B cell (primary cell): ENCODE measurements at regions of chr14 and their contacts with region 1.

Region 1: GRCh38 chr14:68401855-68402254 is 391.0 kb downstream of the ZFP36L1 start:
- DNase-seq: peak; percentile 71
- ATAC-seq: peak; percentile 59
- H3K4me3 ChIP-seq: peak overlapping the region in 1 of 5 experiments; percentile 57
- H3K4me3 Mint-ChIP-seq: peak overlapping the region; percentile 82
- H3K27ac ChIP-seq: peak overlapping the region; percentile 91 to 96
- H3K27ac Mint-ChIP-seq: peak overlapping the region; percentile 97
- H3K4me1 ChIP-seq: peaks cover 91 to 94% of the 10 kb centered on the region in 2 donors
- H3K4me1 Mint-ChIP-seq: peaks cover 90% of the 10 kb centered on the region
- H3K27me3 ChIP-seq: no peaks in the 10 kb centered on the region
- H3K27me3 Mint-ChIP-seq: no peaks in the 10 kb centered on the region
- CTCF ChIP-seq: no peak

Region 2: GRCh38 chr14:68268197-68268596 is 133.7 kb before region 1 on chr14:
- CTCF ChIA-PET with region 1: interaction called, 10 read pairs
- POLR2A ChIA-PET with region 1: no interaction called
- intact Hi-C with region 1: loop called (anchors 5 kb)
- DNase-seq: peak; percentile 92
- ATAC-seq: peak; percentile 71
- H3K4me3 ChIP-seq: peak overlapping the region in 1 of 5 experiments; percentile 14
- H3K4me3 Mint-ChIP-seq: peak overlapping the region; percentile 72
- H3K27ac ChIP-seq: peak overlapping the region; percentile 78 to 94
- H3K27ac Mint-ChIP-seq: peak overlapping the region; percentile 95
- H3K4me1 ChIP-seq: peaks cover 78 to 89% of the 10 kb centered on the region in 2 donors
- H3K4me1 Mint-ChIP-seq: peaks cover 80% of the 10 kb centered on the region
- H3K27me3 ChIP-seq: no peaks in the 10 kb centered on the region
- H3K27me3 Mint-ChIP-seq: no peaks in the 10 kb centered on the region
- CTCF ChIP-seq: no peak

Region 3: DNA sequence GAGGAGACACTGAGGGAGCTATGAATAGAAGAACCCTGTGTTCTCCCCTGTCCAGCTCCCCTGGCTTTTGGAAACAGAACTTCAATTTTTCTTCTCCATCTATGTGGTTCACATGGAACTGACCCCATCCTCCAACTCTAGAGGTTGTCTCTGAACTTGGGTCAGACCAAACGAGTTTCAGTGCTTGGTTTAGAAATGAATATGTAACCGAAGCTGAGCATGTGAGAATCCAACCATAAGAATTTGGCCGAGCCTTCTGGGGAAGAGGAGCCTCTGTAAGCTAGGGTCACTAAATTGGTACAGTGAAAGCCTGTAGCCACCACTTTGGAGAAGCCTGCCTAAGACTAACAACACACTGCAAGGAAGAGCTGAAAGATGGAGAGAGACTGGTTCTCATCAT is 73.3 kb before region 1 on chr14:
- CTCF ChIA-PET with region 1: interaction called, 5 read pairs
- POLR2A ChIA-PET with region 1: interaction called, 8 read pairs
- intact Hi-C with region 1: loop called (anchors 5 kb)
- DNase-seq: no peak
- ATAC-seq: no peak
- H3K4me3 ChIP-seq: no peak overlapping the region
- H3K4me3 Mint-ChIP-seq: no peak overlapping the region
- H3K27ac ChIP-seq: no peak overlapping the region
- H3K27ac Mint-ChIP-seq: no peak overlapping the region
- H3K4me1 ChIP-seq: peaks cover 47 to 53% of the 10 kb centered on the region in 2 donors
- H3K4me1 Mint-ChIP-seq: peaks cover 59% of the 10 kb centered on the region
- H3K27me3 ChIP-seq: no peaks in the 10 kb centered on the region
- H3K27me3 Mint-ChIP-seq: no peaks in the 10 kb centered on the region
- CTCF ChIP-seq: no peak

Region 4: DNA sequence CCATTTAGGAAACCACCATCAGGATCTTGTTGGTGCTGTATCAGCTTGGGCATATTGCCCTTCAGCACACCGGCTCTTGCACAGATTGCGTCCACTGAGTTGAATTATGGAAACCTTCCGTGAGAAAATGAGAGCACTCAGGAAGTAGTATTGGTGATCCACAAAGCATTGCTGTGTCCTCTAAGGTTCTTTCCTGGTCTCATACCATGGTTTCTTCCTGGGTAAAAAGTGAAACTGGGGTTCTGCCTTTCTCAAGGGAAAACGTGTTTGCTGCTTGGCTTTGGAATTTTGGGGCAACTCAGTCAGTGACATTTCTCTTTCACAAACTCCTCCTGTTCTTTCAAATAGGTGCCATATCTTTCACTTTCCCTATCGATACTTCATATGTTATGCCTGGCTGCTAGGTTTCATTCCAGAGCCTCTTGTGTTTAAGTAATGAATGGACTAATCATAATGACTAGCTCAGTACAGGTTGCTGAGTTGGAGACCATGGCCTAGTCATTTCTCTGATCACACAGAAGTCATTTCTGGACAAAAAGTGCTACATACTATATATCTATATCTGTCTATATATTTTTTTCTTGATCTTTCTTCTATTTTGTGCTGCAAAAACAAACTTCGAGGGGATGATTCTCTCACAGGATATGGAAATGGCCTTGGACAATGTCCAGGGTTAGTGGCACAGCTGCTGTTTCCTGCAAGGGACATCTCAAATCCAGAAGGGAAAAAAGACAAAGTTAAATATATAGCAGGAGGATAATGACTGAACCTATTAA is 32.4 kb before region 1 on chr14:
- CTCF ChIA-PET with region 1: interaction called, 11 read pairs
- POLR2A ChIA-PET with region 1: interaction called, 4 read pairs
- intact Hi-C with region 1: loop called (anchors 2 kb)
- DNase-seq: peak; percentile 52
- ATAC-seq: peak; percentile 4
- H3K4me3 ChIP-seq: peak overlapping the region in 4 of 5 experiments; percentile 1 to 20 (median 14)
- H3K4me3 Mint-ChIP-seq: peak overlapping the region; percentile 73
- H3K27ac ChIP-seq: peak overlapping the region; percentile 78 to 84
- H3K27ac Mint-ChIP-seq: peak overlapping the region; percentile 97
- H3K4me1 ChIP-seq: peaks cover 78 to 92% of the 10 kb centered on the region in 2 donors
- H3K4me1 Mint-ChIP-seq: peaks cover 93% of the 10 kb centered on the region
- H3K27me3 ChIP-seq: no peaks in the 10 kb centered on the region
- H3K27me3 Mint-ChIP-seq: no peaks in the 10 kb centered on the region
- CTCF ChIP-seq: no peak

Region 5: DNA sequence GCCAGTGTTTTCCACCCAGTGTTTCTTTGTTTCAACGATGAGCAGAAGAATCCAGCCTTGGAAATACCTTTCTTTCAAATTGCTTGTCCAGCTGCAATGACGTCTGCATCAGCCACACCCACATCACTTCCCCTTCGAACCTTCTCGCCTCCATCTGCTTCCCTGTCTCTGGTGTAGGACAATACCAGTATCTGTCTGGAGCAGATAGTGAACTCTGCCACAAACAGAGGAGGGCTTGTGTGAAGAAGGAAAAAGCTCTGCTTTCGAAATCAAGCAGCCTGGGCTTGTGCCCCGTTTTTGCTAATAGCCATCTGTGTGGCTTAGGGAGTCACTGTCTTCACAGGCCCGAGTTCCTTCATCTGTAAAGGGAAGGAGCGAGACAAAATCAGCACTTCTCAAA is 24.4 kb before region 1 on chr14:
- CTCF ChIA-PET with region 1: interaction called, 5 read pairs
- POLR2A ChIA-PET with region 1: interaction called, 7 read pairs
- intact Hi-C with region 1: loop called (anchors 2 kb)
- DNase-seq: peak; percentile 67
- ATAC-seq: peak; percentile 50
- H3K4me3 ChIP-seq: peak overlapping the region in 1 of 5 experiments; percentile 27
- H3K4me3 Mint-ChIP-seq: peak overlapping the region; percentile 76
- H3K27ac ChIP-seq: peak overlapping the region; percentile 34 to 60
- H3K27ac Mint-ChIP-seq: peak overlapping the region; percentile 92
- H3K4me1 ChIP-seq: peaks cover 50 to 54% of the 10 kb centered on the region in 2 donors
- H3K4me1 Mint-ChIP-seq: peaks cover 63% of the 10 kb centered on the region
- H3K27me3 ChIP-seq: no peaks in the 10 kb centered on the region
- H3K27me3 Mint-ChIP-seq: no peaks in the 10 kb centered on the region
- CTCF ChIP-seq: no peak

Region 6: GRCh38 chr14:68386950-68387779 is 14.7 kb before region 1 on chr14:
- CTCF ChIA-PET with region 1: no interaction called
- POLR2A ChIA-PET with region 1: no interaction called
- intact Hi-C with region 1: loop called (anchors 2 kb)
- DNase-seq: no peak
- ATAC-seq: no peak
- H3K4me3 ChIP-seq: no peak overlapping the region
- H3K4me3 Mint-ChIP-seq: no peak overlapping the region
- H3K27ac ChIP-seq: no peak overlapping the region
- H3K27ac Mint-ChIP-seq: no peak overlapping the region
- H3K4me1 ChIP-seq: peaks cover 10 to 18% of the 10 kb centered on the region in 2 donors
- H3K4me1 Mint-ChIP-seq: peaks cover 26% of the 10 kb centered on the region
- H3K27me3 ChIP-seq: no peaks in the 10 kb centered on the region
- H3K27me3 Mint-ChIP-seq: no peaks in the 10 kb centered on the region
- CTCF ChIP-seq: no peak

Region 7: DNA sequence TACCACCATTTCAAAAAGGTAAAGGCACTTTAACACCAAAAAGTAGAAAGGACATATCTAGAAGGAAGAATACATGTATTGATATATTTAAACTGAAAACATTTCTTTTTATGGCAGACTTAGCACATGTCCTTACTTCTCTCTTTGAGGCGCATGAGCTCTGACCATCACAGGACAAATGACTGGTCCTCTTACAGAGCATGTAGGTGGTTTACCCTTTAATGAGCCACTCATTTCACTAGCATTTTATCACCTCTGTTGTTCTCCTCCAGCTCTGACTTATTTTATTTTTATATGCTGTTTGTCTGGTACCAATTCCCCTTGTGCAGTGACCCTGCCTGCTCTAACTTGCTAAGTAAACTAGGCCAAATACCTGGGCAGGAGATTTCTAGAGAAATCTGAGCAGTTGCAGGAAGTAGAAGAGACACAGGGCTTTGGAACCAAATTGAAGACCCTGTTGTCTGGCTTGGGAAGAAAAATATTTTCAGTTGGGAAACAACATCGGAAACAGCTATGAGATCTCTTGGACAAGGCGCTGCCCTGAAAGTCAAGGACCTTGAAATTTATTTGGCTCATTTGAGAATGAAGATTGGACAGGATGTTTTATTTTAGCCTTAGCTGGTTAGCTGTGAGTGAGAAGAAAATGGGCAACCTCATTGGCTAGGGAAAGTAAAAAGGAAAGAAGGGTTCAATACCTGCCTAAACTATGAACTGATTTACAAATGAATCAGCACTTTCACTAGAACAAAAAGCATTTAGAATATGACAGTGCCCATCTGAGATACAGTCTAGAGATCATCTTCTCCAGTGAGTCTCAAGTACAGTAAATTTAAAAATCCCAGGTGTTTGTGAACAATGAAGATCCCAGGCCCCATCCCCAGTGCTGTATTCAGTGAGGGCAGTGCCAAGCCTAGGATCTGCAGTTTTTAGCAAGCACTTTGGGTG is 16.6 kb after region 1 on chr14:
- CTCF ChIA-PET with region 1: no interaction called
- POLR2A ChIA-PET with region 1: no interaction called
- intact Hi-C with region 1: no loop called
- DNase-seq: no peak
- ATAC-seq: no peak
- H3K4me3 ChIP-seq: no peak overlapping the region
- H3K4me3 Mint-ChIP-seq: no peak overlapping the region
- H3K27ac ChIP-seq: no peak overlapping the region
- H3K27ac Mint-ChIP-seq: no peak overlapping the region
- H3K4me1 ChIP-seq: peaks cover 11 to 14% of the 10 kb centered on the region in 2 donors
- H3K4me1 Mint-ChIP-seq: peaks cover 34% of the 10 kb centered on the region
- H3K27me3 ChIP-seq: no peaks in the 10 kb centered on the region
- H3K27me3 Mint-ChIP-seq: no peaks in the 10 kb centered on the region
- CTCF ChIP-seq: no peak

Region 8: DNA sequence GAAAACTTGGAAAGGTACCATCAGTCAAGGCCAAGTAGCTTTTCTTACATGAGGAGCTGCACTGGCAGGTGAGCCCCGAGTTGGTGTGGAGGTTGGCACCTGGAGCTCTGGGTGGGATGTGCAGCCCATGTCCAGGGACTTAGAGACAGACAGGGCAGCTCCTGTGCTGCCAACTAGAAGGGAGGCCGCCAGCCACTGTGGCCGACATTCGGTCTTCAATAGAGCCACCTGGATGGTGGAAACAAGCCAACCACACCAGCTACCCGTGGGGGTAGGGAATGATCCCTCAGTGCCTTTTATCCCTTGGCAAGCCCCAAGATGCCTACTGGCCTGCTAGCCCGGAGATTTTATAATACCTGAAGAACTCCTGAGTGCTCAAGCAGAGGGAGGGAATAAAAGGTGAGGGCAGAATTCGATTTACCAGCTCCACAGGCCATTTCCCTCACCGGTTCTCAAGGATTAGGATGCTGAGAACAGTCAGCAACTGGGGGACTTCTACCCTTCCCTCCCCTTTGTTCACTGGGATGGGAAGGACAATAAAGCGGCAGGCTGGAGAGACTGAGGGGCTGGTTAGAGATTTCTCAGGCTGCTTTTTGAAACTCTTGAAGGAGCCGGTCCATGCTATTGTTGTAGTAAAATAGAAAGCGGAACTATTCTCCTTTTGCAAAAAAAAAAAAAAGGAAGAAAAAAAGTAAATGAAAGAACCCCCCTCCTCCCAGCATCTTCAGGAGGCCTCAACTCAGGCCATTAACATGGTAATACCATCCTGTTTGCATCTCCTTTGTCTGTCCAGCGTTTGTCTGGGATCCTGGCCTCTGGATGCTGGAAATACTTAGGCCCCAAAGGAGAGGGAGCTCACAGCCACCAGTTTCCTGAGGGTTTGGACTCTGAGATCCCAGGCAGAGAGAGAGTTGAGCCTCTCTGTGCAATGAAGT is 69.4 kb after region 1 on chr14:
- CTCF ChIA-PET with region 1: no interaction called
- POLR2A ChIA-PET with region 1: interaction called, 3 read pairs
- intact Hi-C with region 1: loop called (anchors 5 kb)
- DNase-seq: peak; percentile 79
- ATAC-seq: peak; percentile 82
- H3K4me3 ChIP-seq: peak overlapping the region in 1 of 5 experiments; percentile 28
- H3K4me3 Mint-ChIP-seq: peak overlapping the region; percentile 57
- H3K27ac ChIP-seq: peak overlapping the region; percentile 94
- H3K27ac Mint-ChIP-seq: peak overlapping the region; percentile 97
- H3K4me1 ChIP-seq: peaks cover 78 to 80% of the 10 kb centered on the region in 2 donors
- H3K4me1 Mint-ChIP-seq: peaks cover 73% of the 10 kb centered on the region
- H3K27me3 ChIP-seq: no peaks in the 10 kb centered on the region
- H3K27me3 Mint-ChIP-seq: no peaks in the 10 kb centered on the region
- CTCF ChIP-seq: no peak

Region 9: DNA sequence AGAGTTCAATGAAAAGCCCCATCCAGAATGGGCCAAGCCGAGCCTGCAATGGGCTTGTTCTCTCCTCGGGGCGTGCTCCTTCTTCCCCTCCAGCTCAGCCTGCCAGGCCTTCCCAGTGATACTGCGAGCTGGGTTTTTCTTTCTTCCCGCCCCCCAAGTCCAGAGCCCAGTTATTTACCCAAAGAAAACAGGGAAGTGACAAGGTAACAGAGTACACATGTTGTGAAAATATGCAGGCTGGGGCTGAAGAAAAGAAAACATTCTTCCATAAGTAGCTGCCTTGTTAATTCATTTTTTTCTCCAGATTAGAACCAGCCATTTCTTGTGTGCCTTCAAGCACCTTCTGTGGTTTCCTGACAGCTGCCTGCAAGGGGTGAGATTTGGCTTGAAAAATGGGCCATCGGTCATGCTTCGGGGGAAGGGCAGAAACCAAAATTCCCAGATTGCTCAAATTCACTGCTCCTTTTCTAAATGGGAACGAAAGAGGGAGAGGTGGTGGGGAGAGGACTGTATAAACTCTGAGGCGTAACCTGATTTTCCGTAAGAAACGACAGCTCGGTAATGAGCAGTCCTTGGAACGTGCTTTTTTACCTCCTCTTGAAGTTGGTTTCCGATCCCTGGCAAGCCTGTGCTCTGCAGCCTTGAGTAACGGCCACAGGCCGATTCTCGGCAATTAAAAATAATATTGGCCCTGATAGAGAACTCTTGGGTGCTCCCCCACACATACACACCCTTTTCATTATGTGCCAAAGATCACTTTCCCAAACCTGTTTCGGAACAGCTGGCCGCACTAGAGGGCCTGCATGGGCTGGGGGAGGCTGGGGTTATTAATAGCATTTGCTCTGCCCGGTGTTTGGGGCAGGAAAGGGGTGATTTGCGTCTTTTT is 161.6 kb after region 1 on chr14:
- CTCF ChIA-PET with region 1: no interaction called
- POLR2A ChIA-PET with region 1: no interaction called
- intact Hi-C with region 1: no loop called
- DNase-seq: peak; percentile 27
- ATAC-seq: no peak
- H3K4me3 ChIP-seq: peak overlapping the region in 1 of 5 experiments; percentile 7
- H3K4me3 Mint-ChIP-seq: peak overlapping the region; percentile 48
- H3K27ac ChIP-seq: no peak overlapping the region
- H3K27ac Mint-ChIP-seq: no peak overlapping the region
- H3K4me1 ChIP-seq: peaks cover 19 to 34% of the 10 kb centered on the region in 2 donors
- H3K4me1 Mint-ChIP-seq: peaks cover 27% of the 10 kb centered on the region
- H3K27me3 ChIP-seq: no peaks in the 10 kb centered on the region
- H3K27me3 Mint-ChIP-seq: no peaks in the 10 kb centered on the region
- CTCF ChIP-seq: no peak